Activated CD8-positive, alpha-beta memory T cell treated with anti-CD3 and anti-CD28 coated beads, Interleukin-2, amount 10 ng/mL, durations not matched to agents 7 days and 5 days (primary cell): ENCODE measurements at regions of chr11 and their contacts with region 1.

Region 1: GRCh38 chr11:88231894-88232482 is 56.7 kb upstream of the RAB38 start:
- DNase-seq: no peak
- ATAC-seq: peak; percentile 73
- H3K4me3 Mint-ChIP-seq: no peak overlapping the region
- H3K27ac Mint-ChIP-seq: no peak overlapping the region
- H3K4me1 Mint-ChIP-seq: no peaks in the 10 kb centered on the region
- H3K27me3 Mint-ChIP-seq: no peaks in the 10 kb centered on the region

Region 2: GRCh38 chr11:88543902-88544655 is 312.1 kb after region 1 on chr11:
- CTCF ChIA-PET with region 1: interaction called, 16 read pairs
- DNase-seq: peak; percentile 87
- ATAC-seq: peak; percentile 100
- H3K4me3 Mint-ChIP-seq: no peak overlapping the region
- H3K27ac Mint-ChIP-seq: peak overlapping the region; percentile 49
- H3K4me1 Mint-ChIP-seq: peaks cover 6% of the 10 kb centered on the region
- H3K27me3 Mint-ChIP-seq: peaks cover 13% of the 10 kb centered on the region